ENCODE measurements at regions of chr17 and their contacts with region 1.

Region 1: GRCh38 chr17:65261682-65262636 is 124.8 kb downstream of the RGS9 start:
- DNase-seq: no peak
- H3K4me3 ChIP-seq: no peak overlapping the region
- H3K27ac ChIP-seq: no peak overlapping the region
- H3K4me1 ChIP-seq: no peaks in the 10 kb centered on the region
- H3K27me3 ChIP-seq: no peaks in the 10 kb centered on the region
- CTCF ChIP-seq: no peak
- EP300 ChIP-seq: no peak
- POLR2A ChIP-seq: no peak

Region 2: DNA sequence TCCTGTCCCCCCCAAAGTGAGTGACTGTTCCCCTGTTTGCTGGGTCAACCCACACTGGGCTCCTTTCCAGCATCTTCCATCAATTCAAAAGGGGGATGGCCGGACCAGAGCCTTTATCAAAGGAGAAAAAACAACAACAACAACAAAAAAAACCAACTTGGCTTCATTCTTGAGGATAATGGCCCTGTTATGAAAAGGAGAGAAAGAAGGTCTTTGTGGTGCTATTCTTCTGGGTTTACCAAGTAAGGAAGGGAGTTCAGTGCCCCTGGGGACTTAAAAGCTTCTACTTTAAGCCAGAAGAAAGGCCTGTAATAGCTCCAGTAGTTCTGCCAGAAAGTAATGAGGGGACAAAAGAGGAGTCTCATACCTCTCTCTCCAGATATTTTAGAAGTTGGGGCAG is 53.2 kb before region 1 on chr17:
- intact Hi-C with region 1: loop called (anchors 2 kb)
- DNase-seq: no peak
- H3K4me3 ChIP-seq: no peak overlapping the region
- H3K27ac ChIP-seq: no peak overlapping the region
- H3K4me1 ChIP-seq: no peaks in the 10 kb centered on the region
- H3K27me3 ChIP-seq: no peaks in the 10 kb centered on the region
- CTCF ChIP-seq: no peak
- EP300 ChIP-seq: no peak
- POLR2A ChIP-seq: no peak

Region 3: GRCh38 chr17:65231662-65232335 is 30.2 kb before region 1 on chr17:
- intact Hi-C with region 1: no loop called
- DNase-seq: no peak
- H3K4me3 ChIP-seq: no peak overlapping the region
- H3K27ac ChIP-seq: no peak overlapping the region
- H3K4me1 ChIP-seq: peaks cover 0 to 10% (median 7%) of the 10 kb centered on the region in 4 donors
- H3K27me3 ChIP-seq: peaks cover 0 to 25% (median 8%) of the 10 kb centered on the region in 3 donors
- CTCF ChIP-seq: peak in 3 of 4 experiments; percentile 16 to 51 (median 32)
- EP300 ChIP-seq: no peak
- POLR2A ChIP-seq: no peak